Posterior vena cava (tissue), 2 donors: ENCODE measurements at regions of chr11 and their contacts with region 1.

Region 1: GRCh38 chr11:82229341-82229740 is 504.3 kb downstream of the FAM181B start:
- DNase-seq: no peak

Region 2: GRCh38 chr11:81569999-81570398 is 659.3 kb before region 1 on chr11:
- intact Hi-C with region 1: loop called in 1 of 2 experiments (anchors 5 kb)
- DNase-seq: no peak

Region 3: GRCh38 chr11:81725701-81726100 is 503.6 kb before region 1 on chr11:
- intact Hi-C with region 1: no loop called
- DNase-seq: no peak

Region 4: DNA sequence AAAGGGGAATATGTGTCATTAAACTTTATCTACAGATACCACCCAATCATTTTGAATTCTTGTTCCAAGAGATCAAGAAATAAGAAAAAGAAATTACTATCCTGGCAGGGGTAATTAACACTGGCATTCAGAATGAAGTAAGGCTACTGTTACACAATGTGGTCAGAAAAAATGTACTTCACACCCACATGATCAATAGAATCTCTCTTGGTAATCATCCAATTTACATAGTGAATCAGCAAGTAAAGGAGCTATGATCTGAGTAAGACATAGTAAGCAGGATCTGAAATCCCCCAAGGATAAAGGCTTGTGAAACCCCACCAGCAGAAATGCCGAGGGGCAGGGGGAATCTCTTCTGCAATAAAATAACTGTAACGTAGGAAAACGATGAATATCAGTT is 37.8 kb after region 1 on chr11:
- intact Hi-C with region 1: no loop called
- DNase-seq: no peak

Region 5: DNA sequence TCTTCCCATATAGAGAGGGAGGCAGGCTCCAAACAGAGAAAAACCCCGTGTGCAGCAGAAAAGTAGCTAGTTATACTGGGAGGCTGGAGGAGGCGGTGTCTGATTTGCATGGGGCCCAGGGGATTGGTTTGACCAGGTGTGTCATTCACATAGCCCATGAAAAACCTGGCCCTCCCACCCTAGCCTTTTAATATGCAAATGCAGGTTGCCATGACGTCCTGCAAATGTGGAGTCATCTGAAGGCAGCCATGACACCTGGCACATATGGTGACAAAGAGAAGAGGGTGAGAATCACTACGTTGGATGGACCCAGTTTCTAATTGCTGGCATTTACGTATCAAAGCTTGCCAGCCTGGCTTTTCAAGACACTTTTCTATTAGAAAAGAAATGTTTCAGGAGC is 446.5 kb after region 1 on chr11:
- intact Hi-C with region 1: no loop called
- DNase-seq: no peak